ENCODE measurements at regions of chr14 and their contacts with region 1.

Region 1: GRCh38 chr14:59126710-59127432 is 61.6 kb upstream of the DAAM1 start:
- DNase-seq: no peak
- H3K4me3 ChIP-seq: no peak overlapping the region
- H3K27ac ChIP-seq: no peak overlapping the region
- H3K4me1 ChIP-seq: no peaks in the 10 kb centered on the region
- H3K27me3 ChIP-seq: no peaks in the 10 kb centered on the region
- CTCF ChIP-seq: peak; percentile 73

Region 2: GRCh38 chr14:58969951-58970751 is 156.7 kb before region 1 on chr14:
- intact Hi-C with region 1: no loop called
- DNase-seq: no peak
- H3K4me3 ChIP-seq: no peak overlapping the region
- H3K27ac ChIP-seq: no peak overlapping the region
- H3K4me1 ChIP-seq: no peaks in the 10 kb centered on the region
- H3K27me3 ChIP-seq: no peaks in the 10 kb centered on the region
- CTCF ChIP-seq: no peak

Region 3: GRCh38 chr14:59028476-59029202 is 98.2 kb before region 1 on chr14:
- intact Hi-C with region 1: loop called (anchors 5 kb)
- DNase-seq: peak; percentile 66
- H3K4me3 ChIP-seq: no peak overlapping the region
- H3K27ac ChIP-seq: no peak overlapping the region
- H3K4me1 ChIP-seq: no peaks in the 10 kb centered on the region
- H3K27me3 ChIP-seq: no peaks in the 10 kb centered on the region
- CTCF ChIP-seq: peak; percentile 70

Region 4: DNA sequence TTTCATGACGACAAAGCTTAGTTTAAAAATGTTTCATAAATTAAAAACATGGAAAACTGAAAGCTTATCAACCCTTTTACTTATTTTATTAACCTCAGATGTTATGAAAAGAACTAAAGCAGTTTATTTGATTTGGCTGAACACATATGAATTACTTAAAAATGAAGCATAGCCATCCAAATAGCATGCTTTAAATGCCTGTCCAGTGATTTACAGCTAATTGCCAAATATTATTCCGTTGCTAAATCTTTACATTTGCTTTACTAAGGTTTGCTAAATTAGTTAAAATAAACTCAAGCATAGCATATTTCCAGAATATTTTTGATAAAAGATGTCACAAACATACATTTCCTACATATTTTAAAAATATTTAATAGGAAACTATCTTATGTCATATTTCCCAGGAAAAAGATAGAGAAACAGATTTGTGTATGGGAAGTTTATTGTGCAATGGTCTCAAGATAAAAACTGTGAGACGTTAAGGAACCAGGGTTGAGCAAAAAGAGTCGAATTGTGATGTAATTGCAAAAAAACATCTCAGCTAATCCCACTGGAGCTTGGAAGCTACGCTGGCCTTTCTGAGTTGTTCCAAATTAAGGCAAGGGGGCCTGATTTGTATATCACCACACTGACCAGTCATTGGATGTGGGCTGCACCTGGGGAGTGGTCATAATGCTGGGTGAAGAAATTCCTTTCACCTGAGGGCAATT is 312.5 kb after region 1 on chr14:
- intact Hi-C with region 1: loop called (anchors 2 kb)
- DNase-seq: no peak
- H3K4me3 ChIP-seq: no peak overlapping the region
- H3K27ac ChIP-seq: no peak overlapping the region
- H3K4me1 ChIP-seq: no peaks in the 10 kb centered on the region
- H3K27me3 ChIP-seq: no peaks in the 10 kb centered on the region
- CTCF ChIP-seq: no peak

Measured in colonic mucosa (tissue), 4 donors.